ENCODE measurements at regions of chr4 and their contacts with region 1.

Region 1: GRCh38 chr4:145936142-145936996 is 2.3 kb downstream of the ZNF827 start:
- DNase-seq: peak; percentile 64 to 67
- H3K4me3 ChIP-seq: peak overlapping the region; percentile 64
- H3K4me3 Mint-ChIP-seq: peak overlapping the region; percentile 92
- H3K27ac Mint-ChIP-seq: peak overlapping the region; percentile 76
- H3K4me1 ChIP-seq: peaks cover 5% of the 10 kb centered on the region; the same call in 1 of the 2 replicates
- H3K4me1 Mint-ChIP-seq: peaks cover 10% of the 10 kb centered on the region
- H3K27me3 ChIP-seq: no peaks in the 10 kb centered on the region; the same call in 1 of the 2 replicates
- H3K27me3 Mint-ChIP-seq: no peaks in the 10 kb centered on the region
- CTCF ChIP-seq: peak; percentile 7 to 13

Region 2: DNA sequence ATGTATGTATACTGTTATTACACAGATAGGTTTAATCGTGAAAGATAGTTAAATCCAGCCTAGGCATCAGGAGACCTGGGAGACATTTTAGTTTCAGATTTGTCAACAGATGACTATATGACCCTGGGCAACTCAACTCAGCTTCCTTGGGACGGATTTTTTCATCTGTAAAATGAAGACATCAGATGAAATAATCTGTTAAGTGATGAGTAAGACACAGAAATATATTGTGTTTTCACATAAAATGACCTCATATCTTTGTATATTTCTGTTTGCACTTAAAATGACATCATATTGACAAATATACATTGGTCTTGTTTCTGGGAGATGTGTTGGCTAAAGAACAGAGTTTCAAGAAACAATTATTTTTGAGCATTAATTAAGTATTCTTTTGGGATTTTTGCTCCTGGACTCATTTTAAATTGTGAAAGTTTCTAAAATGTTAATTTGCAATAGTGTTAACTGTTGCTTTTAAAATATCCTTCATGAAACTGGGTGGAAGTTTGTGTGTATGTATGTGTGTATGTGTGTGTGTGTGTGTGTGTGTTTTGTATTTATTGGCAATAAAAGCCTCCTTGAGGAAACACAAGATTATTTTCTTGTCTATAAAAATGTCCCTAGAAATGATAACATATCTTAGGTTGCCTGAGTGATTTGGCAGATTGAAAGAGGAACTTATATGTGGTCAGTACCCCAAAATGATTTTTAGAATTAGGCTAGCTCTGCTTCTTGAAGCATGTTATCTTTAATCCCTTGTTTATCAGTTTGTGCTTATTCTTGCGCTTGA is 346.3 kb before region 1 on chr4:
- CTCF ChIA-PET with region 1: no interaction called
- POLR2A ChIA-PET with region 1: no interaction called
- intact Hi-C with region 1: no loop called
- DNase-seq: no peak
- H3K4me3 ChIP-seq: no peak overlapping the region
- H3K4me3 Mint-ChIP-seq: no peak overlapping the region
- H3K27ac Mint-ChIP-seq: no peak overlapping the region
- H3K4me1 ChIP-seq: no peaks in the 10 kb centered on the region
- H3K4me1 Mint-ChIP-seq: no peaks in the 10 kb centered on the region
- H3K27me3 ChIP-seq: no peaks in the 10 kb centered on the region
- H3K27me3 Mint-ChIP-seq: peaks cover 7% of the 10 kb centered on the region
- CTCF ChIP-seq: no peak

Region 3: GRCh38 chr4:145732895-145733880 is 203.2 kb before region 1 on chr4:
- CTCF ChIA-PET with region 1: interaction called, 3 read pairs
- POLR2A ChIA-PET with region 1: no interaction called
- intact Hi-C with region 1: loop called (anchors 5 kb)
- DNase-seq: peak; percentile 93
- H3K4me3 ChIP-seq: peak overlapping the region; percentile 63
- H3K4me3 Mint-ChIP-seq: peak overlapping the region; percentile 84
- H3K27ac Mint-ChIP-seq: peak overlapping the region; percentile 89
- H3K4me1 ChIP-seq: peaks cover 49% of the 10 kb centered on the region
- H3K4me1 Mint-ChIP-seq: peaks cover 27% of the 10 kb centered on the region
- H3K27me3 ChIP-seq: no peaks in the 10 kb centered on the region
- H3K27me3 Mint-ChIP-seq: no peaks in the 10 kb centered on the region
- CTCF ChIP-seq: no peak

Region 4: DNA sequence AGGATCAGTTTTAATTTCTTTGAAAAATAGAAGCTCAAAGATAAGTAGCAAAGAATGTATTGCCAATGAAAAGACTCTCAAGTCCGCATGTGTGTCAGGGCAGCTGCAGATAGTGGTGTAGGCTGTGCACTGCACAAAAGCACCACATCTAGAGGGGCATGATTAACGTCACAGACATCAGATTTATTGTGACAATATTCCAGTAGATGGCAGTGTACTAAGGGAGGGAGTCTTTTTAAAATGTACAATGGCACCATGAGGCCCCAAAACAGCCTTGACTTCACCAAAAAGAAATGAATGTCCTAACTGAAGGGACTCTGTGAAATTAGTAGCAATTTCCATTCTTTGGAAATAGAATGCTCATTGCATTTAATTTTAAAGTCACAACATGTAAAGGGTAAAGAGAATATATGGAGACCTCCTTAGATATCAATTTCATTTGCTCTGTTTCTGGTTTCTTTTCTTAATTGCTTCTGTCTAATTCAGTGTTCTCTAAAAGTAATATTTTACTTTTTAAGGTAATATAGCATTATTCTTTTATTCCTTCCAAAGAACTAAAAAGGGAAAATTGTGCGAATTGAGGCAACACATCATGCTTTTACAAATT is 96.1 kb before region 1 on chr4:
- CTCF ChIA-PET with region 1: no interaction called
- POLR2A ChIA-PET with region 1: no interaction called
- intact Hi-C with region 1: loop called (anchors 1 kb)
- DNase-seq: peak in 1 of 2 experiments; percentile 30
- H3K4me3 ChIP-seq: no peak overlapping the region
- H3K4me3 Mint-ChIP-seq: no peak overlapping the region
- H3K27ac Mint-ChIP-seq: no peak overlapping the region
- H3K4me1 ChIP-seq: no peaks in the 10 kb centered on the region
- H3K4me1 Mint-ChIP-seq: peaks cover 5% of the 10 kb centered on the region
- H3K27me3 ChIP-seq: no peaks in the 10 kb centered on the region
- H3K27me3 Mint-ChIP-seq: no peaks in the 10 kb centered on the region
- CTCF ChIP-seq: peak in 1 of 2 experiments; percentile 45

Measured in Caco-2 (cell line).